H1 (cell line): ENCODE measurements at regions of chr20 and their contacts with region 1.

Region 1: DNA sequence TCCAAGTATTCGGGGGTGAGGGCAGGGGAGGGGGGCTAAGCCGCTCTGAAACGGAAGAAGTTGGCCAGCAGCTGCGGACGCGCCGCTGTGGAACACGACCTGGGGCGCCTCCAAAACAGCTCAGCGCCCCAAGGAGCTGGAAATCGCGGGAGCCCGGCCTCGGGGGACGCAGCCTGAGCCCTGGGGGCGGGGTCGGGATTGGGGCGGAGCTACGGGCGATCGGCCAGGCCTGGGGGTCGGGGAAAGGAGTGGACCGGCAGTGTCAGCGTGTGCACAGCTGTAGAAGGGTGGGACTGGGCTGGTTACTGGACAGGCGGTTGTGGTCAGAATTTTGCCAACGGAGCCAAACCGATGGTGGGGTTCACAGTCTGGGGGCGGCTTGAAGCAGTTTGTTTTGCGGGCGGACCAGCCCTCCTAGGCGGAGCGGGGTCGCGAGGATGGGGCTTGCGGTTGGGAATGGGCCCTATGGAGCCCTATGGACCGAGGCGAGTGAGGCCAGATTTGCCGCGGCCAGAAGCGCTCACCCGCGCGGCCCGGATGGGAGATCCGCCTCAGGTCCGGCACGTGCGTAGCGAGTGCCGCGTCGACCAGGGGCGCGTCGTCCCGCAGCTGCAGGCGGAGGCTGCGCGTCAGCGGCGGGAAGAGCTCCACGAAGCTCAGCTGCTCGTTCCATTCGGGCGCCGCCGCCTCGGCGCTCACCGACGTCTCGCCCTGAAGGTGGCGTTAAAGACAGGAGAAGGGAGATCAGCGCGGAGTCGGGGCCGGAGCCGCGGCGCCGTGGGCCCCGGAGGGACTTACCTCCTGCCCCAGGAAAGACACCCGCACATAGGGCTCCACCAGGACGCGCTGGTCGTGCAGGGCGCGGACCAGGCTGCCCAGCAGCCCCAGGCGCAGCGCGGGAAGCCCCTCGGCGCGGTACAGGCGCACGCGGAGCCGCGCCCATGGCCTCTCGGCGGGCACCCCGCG is 14.3 kb upstream of the SPAG4 start:
- DNase-seq: peak in 1 of 2 experiments; percentile 91
- H3K4me3 ChIP-seq: peak overlapping the region; percentile 28 to 66 (median 46)
- H3K27ac ChIP-seq: no peak overlapping the region
- H3K4me1 ChIP-seq: peaks cover 0 to 14% (median 7%) of the 10 kb centered on the region in 4 experiments; a peak in 4 of 7 replicates
- H3K27me3 ChIP-seq: peaks cover 6 to 46% (median 34%) of the 10 kb centered on the region in 4 experiments
- CTCF ChIP-seq: peak; percentile 16 to 42 (median 24); a peak in 3 of 4 replicates
- EP300 ChIP-seq: no peak
- POLR2A ChIP-seq: no peak
- RAD21 ChIP-seq: peak; percentile 25 to 29; a peak in 2 of 4 replicates

Region 2: GRCh38 chr20:35561268-35561667 is 40.0 kb before region 1 on chr20:
- CTCF ChIA-PET with region 1: interaction called, 30 read pairs
- POLR2A ChIA-PET with region 1: interaction called, 5 read pairs
- DNase-seq: peak in 1 of 2 experiments; percentile 66
- H3K4me3 ChIP-seq: no peak overlapping the region
- H3K27ac ChIP-seq: no peak overlapping the region
- H3K4me1 ChIP-seq: peaks cover 0 to 4% (median 2%) of the 10 kb centered on the region in 4 experiments; a peak in 4 of 7 replicates
- H3K27me3 ChIP-seq: no peaks in the 10 kb centered on the region
- CTCF ChIP-seq: peak; percentile 61 to 76 (median 61)
- EP300 ChIP-seq: no peak
- POLR2A ChIP-seq: no peak
- RAD21 ChIP-seq: peak; percentile 73 to 79

Region 3: DNA sequence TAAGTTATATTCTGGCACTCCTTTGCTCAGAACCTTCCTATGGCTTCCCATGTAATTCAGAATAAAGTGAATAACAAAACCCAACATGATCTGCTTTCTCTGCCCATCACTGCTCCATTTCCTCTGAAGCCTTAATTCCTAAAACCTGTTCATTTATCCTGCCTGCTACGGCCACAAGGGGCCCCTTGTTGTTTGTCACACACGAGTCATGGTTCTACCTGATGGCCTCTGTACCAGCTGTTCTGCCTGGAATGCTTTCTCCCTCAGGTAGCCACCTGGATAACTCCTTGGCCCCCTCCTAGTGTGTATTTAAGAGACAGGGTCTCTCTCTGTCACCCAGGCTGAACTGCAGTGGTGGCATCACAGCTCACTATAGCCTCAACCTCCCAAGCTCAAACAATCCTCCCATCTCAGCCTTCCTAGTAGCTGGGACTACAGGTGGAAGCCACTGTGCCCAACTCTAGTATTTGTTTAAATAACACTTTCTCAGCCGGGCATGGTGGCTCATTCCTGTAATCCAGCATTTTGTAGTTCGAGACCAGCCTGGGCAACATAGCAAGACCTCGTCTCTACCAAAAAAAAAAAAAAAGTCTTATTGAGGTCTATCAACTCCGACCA is 32.5 kb before region 1 on chr20:
- CTCF ChIA-PET with region 1: interaction called, 20 read pairs
- POLR2A ChIA-PET with region 1: interaction called, 4 read pairs
- DNase-seq: no peak
- H3K4me3 ChIP-seq: no peak overlapping the region
- H3K27ac ChIP-seq: no peak overlapping the region
- H3K4me1 ChIP-seq: no peaks in the 10 kb centered on the region
- H3K27me3 ChIP-seq: no peaks in the 10 kb centered on the region
- CTCF ChIP-seq: peak; percentile 44 to 66 (median 57)
- EP300 ChIP-seq: no peak
- POLR2A ChIP-seq: no peak
- RAD21 ChIP-seq: peak; percentile 47 to 66